ENCODE measurements at regions of chr12 and their contacts with region 1.

Region 1: DNA sequence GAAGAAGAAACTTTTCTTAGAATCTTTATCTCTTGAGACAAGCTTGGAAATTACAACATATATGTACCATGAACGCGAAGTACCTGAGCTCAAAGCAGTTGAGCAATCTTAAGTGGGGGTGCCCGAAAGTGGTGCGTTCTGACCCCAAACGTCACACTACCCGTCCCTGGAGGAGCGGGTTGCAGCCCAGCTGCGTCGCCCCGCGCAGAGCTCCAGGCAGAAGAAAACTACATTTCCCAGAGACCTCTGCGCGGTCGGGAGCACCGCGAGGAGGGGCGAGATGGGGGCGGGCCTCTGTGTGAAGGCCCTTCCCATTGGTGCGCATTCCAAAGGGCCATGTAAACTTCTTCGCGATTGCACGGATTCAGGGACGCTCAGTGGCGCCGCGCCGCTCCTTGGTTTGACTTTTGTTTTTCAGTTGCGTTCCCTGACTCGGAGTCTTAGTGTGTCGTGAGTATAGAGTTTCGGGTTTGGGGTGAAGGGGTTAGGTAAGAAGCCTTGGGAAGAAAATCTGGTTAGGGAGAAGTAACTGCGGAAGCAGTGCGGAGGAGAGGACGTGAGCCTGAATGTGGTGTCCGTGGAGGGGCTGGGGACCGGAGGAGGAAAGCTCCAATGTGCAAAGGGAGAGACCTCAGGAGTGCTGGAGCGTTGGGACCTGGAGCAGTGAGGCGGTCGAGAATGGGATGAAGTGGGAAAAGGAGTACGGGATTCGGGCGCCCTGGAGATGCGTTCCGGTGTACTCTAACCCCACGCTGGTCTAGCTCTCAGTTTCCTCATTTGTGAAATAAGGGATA is at the start of gene CCDC77:
- DNase-seq: peak; percentile 92 to 95 (median 93)
- ATAC-seq: peak; percentile 99
- H3K4me3 ChIP-seq: peak within 1 kb of the TSS; percentile 67
- H3K27ac ChIP-seq: peak within 1 kb of the TSS; percentile 80
- H3K4me1 ChIP-seq: peaks cover 7 to 8% of the 10 kb centered on the region in 2 experiments; a peak in 3 of 5 replicates
- H3K27me3 ChIP-seq: no peaks in the 10 kb centered on the region
- CTCF ChIP-seq: peak; percentile 15 to 31 (median 29); a peak in 2 of 6 replicates
- EP300 ChIP-seq: no peak
- POLR2A ChIP-seq: peak; percentile 84
- RAD21 ChIP-seq: no peak
- polyA plus RNA-seq, gene CCDC77: 11.8 to 17.8 TPM

Region 2: GRCh38 chr12:389139-390096 is 12.0 kb before region 1 on chr12 and contains the start of gene KDM5A:
- CTCF ChIA-PET with region 1: no interaction called
- POLR2A ChIA-PET with region 1: interaction called, 13 read pairs
- in situ Hi-C with region 1: no loop called
- intact Hi-C with region 1: no loop called
- DNase-seq: peak; percentile 78 to 89 (median 82)
- ATAC-seq: peak; percentile 94
- H3K4me3 ChIP-seq: peak within 1 kb of the TSS; percentile 98
- H3K27ac ChIP-seq: peak within 1 kb of the TSS; percentile 98
- H3K4me1 ChIP-seq: no peaks in the 10 kb centered on the region; a peak in 1 of 5 replicates
- H3K27me3 ChIP-seq: no peaks in the 10 kb centered on the region
- CTCF ChIP-seq: no peak
- EP300 ChIP-seq: no peak
- POLR2A ChIP-seq: peak; percentile 73
- RAD21 ChIP-seq: no peak
- polyA plus RNA-seq, gene KDM5A: 5.5 to 6.0 TPM

Region 3: GRCh38 chr12:414859-415258 is 13.4 kb after region 1 on chr12:
- CTCF ChIA-PET with region 1: no interaction called
- POLR2A ChIA-PET with region 1: interaction called, 10 read pairs
- in situ Hi-C with region 1: no loop called
- intact Hi-C with region 1: no loop called
- DNase-seq: no peak
- ATAC-seq: no peak
- H3K4me3 ChIP-seq: no peak overlapping the region
- H3K27ac ChIP-seq: no peak overlapping the region
- H3K4me1 ChIP-seq: no peaks in the 10 kb centered on the region
- H3K27me3 ChIP-seq: no peaks in the 10 kb centered on the region
- CTCF ChIP-seq: no peak
- EP300 ChIP-seq: no peak
- POLR2A ChIP-seq: no peak
- RAD21 ChIP-seq: no peak

Measured in K562 (cell line).